ENCODE measurements at regions of chr14 and their contacts with region 1.

Region 1: GRCh38 chr14:98926146-98926545 is 345.9 kb downstream of the BCL11B start:
- DNase-seq: peak; percentile 28 to 71 (median 59)
- ATAC-seq: peak; percentile 94
- H3K4me3 ChIP-seq: no peak overlapping the region
- H3K4me3 Mint-ChIP-seq: peak overlapping the region; percentile 74
- H3K27ac ChIP-seq: peak overlapping the region; percentile 13 to 39
- H3K27ac Mint-ChIP-seq: peak overlapping the region; percentile 91
- H3K4me1 ChIP-seq: peaks cover 42% of the 10 kb centered on the region
- H3K4me1 Mint-ChIP-seq: peaks cover 64% of the 10 kb centered on the region
- H3K27me3 ChIP-seq: no peaks in the 10 kb centered on the region
- H3K27me3 Mint-ChIP-seq: no peaks in the 10 kb centered on the region
- CTCF ChIP-seq: no peak

Region 2: DNA sequence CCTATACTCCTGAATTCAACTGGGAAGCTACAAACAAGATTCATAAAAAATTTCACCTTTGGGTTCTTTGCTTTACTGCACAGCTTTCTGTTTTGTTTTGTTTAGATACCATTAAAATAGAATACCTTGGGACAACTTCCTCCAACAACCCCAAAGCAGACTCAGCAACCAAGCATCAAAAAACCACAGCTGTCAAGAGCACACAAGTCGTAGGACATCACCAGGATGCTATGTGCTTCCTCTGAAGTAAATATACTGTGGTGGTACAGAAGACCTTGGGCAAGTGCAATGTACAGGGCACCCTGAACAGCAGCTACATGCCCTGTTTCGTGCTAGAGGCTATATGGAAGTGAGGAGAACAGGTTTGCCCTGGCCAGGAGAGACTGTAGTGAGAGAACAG is 13.5 kb before region 1 on chr14:
- CTCF ChIA-PET with region 1: no interaction called
- POLR2A ChIA-PET with region 1: interaction called, 23 read pairs
- intact Hi-C with region 1: no loop called
- DNase-seq: peak in 5 of 14 experiments; percentile 9 to 79 (median 39)
- ATAC-seq: peak; percentile 84
- H3K4me3 ChIP-seq: no peak overlapping the region
- H3K4me3 Mint-ChIP-seq: peak overlapping the region; percentile 21
- H3K27ac ChIP-seq: no peak overlapping the region
- H3K27ac Mint-ChIP-seq: peak overlapping the region; percentile 60
- H3K4me1 ChIP-seq: peaks cover 22% of the 10 kb centered on the region
- H3K4me1 Mint-ChIP-seq: peaks cover 47% of the 10 kb centered on the region
- H3K27me3 ChIP-seq: no peaks in the 10 kb centered on the region
- H3K27me3 Mint-ChIP-seq: no peaks in the 10 kb centered on the region
- CTCF ChIP-seq: no peak

Region 3: DNA sequence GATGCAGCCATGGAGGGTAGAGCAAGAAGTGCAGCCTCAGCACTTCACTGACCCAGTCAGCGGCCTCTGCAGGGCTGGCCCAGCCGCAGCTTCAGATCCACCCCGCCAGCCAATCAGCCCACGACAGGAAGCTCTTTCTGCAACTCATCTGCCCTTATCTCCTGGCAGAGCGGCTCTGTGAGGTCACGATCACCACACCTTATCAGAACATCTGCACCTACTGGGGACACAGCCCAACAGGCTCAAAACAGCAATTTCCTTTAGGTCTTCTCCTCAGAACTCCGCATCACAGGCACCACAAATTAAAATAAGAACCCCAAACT is 58.5 kb after region 1 on chr14:
- CTCF ChIA-PET with region 1: no interaction called
- POLR2A ChIA-PET with region 1: interaction called, 29 read pairs
- intact Hi-C with region 1: loop called in 1 of 2 experiments (anchors 5 kb)
- DNase-seq: peak; percentile 49 to 92 (median 66)
- ATAC-seq: peak; percentile 86
- H3K4me3 ChIP-seq: peak overlapping the region; percentile 28
- H3K4me3 Mint-ChIP-seq: peak overlapping the region; percentile 81
- H3K27ac ChIP-seq: peak overlapping the region; percentile 31 to 77
- H3K27ac Mint-ChIP-seq: peak overlapping the region; percentile 89
- H3K4me1 ChIP-seq: peaks cover 32% of the 10 kb centered on the region
- H3K4me1 Mint-ChIP-seq: peaks cover 54% of the 10 kb centered on the region
- H3K27me3 ChIP-seq: no peaks in the 10 kb centered on the region
- H3K27me3 Mint-ChIP-seq: no peaks in the 10 kb centered on the region
- CTCF ChIP-seq: no peak

Measured in CD4-positive, alpha-beta T cell (primary cell).